Tibial artery (tissue), 4 donors: ENCODE measurements at regions of chr3 and their contacts with region 1.

Region 1: DNA sequence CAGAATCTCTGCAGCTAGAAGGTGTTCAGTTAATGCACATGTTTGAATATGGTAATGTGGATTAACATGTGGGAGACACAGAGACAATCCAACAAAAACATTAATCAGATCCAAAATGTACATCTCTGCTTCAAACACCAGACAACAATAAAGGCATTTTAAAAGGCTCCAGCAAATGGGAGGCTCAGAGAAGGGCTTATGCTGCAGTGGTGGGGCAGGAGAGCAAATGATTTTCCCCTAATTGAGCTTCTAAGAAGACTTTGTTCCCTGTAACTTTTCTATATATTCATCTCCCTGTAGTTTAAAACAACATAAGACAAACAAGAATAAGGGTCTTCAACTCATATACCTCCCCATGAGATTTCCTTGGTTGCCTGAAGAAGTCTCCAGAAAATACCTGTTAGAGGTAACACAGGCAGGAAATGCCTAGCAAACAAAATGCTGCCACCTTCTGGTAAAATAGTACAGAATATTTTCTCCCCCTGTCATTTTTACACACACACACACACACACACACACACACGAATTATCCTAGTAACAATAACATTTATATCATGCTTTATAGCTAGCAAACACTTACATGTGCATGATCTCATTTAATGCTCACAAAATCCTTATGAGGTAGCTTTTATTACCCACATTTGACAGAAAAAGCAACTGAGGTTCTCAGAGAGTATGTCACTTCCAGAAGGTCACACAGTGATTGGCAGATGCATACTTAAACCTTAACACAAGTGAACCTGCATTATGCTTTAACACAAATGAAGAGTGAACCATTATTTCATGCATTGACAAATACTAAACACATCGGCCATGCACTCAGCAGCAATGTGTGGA is 123.4 kb upstream of the MB21D2 start:
- DNase-seq: no peak
- H3K4me3 ChIP-seq: no peak overlapping the region
- H3K27ac ChIP-seq: no peak overlapping the region
- H3K4me1 ChIP-seq: no peaks in the 10 kb centered on the region
- H3K27me3 ChIP-seq: peaks cover 0 to 3% of the 10 kb centered on the region in 2 donors
- CTCF ChIP-seq: peak; percentile 44 to 53

Region 2: DNA sequence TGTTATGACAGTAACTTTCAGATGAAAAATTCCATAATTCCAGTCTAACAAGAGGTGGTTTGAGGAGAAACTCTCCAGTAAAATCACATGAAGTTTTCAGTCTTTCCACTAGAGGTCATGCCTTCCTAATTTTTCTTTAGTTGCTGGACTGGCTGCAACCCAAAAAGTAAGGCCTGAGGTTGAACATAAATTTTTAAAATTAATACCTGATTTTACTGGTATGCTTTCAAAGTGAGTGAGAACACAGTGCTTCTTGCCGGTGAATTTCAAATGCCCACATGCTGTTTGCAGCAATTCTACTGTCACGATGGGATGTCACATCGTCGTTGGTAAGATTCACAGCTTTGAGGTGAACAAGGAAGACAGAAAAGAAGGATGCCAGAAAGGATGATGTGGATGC is 224.7 kb before region 1 on chr3:
- intact Hi-C with region 1: loop called (anchors 2 kb)
- DNase-seq: no peak
- H3K4me3 ChIP-seq: no peak overlapping the region
- H3K27ac ChIP-seq: no peak overlapping the region
- H3K4me1 ChIP-seq: peaks cover 0 to 11% (median 6%) of the 10 kb centered on the region in 4 donors
- H3K27me3 ChIP-seq: no peaks in the 10 kb centered on the region
- CTCF ChIP-seq: peak; percentile 72 to 75

Region 3: GRCh38 chr3:193086688-193087087 is 45.6 kb after region 1 on chr3:
- intact Hi-C with region 1: no loop called
- DNase-seq: no peak
- H3K4me3 ChIP-seq: no peak overlapping the region
- H3K27ac ChIP-seq: no peak overlapping the region
- H3K4me1 ChIP-seq: no peaks in the 10 kb centered on the region
- H3K27me3 ChIP-seq: no peaks in the 10 kb centered on the region
- CTCF ChIP-seq: no peak

Region 4: DNA sequence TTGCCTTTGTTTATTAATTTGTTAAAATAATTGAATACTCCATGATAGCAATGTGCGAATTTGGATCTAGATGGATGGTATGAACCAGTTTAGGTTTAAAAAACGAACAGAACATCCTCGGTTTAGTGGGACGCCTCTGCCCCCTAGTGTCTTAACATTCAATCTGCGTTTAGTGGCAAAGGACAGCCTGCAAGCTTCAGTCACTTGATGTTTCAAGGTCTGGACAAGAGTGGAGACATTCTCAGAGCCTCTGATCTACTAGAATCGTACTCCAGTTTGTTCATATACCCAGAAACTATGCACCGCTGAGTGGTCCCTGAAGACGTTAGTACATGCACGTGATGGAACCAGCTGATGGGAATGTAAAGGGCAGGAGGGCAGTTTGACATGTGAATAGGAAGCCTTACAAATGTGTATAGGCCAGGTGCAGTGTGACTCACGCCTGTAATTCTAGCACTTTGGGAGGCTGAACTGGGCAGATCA is 531.4 kb after region 1 on chr3:
- intact Hi-C with region 1: loop called (anchors 10 kb)
- DNase-seq: no peak
- H3K4me3 ChIP-seq: no peak overlapping the region
- H3K27ac ChIP-seq: no peak overlapping the region
- H3K4me1 ChIP-seq: no peaks in the 10 kb centered on the region
- H3K27me3 ChIP-seq: no peaks in the 10 kb centered on the region
- CTCF ChIP-seq: peak; percentile 64 to 67